GM12878 (cell line): ENCODE measurements at regions of chr11 and their contacts with region 1.

Region 1: DNA sequence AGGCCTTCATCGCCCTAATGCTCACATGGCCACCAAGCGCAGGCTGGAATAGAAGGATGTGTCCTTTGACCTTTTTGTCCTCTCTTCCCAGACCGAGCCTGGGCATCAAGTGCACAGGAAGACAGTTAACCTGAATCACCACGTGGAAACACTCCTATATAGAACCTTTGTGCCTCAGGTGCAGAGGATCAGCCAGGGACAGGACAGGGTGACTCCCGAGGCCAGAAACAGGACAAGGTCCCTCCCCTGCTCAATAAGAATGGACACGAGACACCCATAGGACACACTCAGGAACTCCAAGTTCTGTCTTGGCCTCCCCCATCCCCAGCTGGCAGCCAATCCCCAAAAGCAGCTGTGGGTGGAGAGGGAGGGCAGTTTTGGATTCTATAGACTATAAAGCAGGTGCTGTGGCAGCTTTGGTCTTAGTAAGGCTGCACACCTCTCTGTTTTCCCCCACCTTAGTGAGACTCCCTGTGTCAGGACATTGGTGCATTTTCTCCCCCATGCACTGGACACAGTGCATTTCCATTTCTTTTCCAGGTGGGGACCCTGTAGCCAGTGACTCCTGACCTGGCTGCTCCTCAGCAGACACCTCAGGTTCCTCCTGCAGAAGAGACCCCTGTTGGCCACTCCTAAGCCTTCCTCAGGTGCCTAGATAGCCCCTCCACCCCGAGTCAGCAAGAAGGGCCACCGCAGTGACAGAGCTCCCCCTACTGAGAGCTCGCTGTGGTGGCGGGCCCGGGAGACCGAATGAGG is 43.6 kb upstream of the POU2AF1 start:
- DNase-seq: no peak
- ATAC-seq: peak; percentile 93
- H3K4me3 ChIP-seq: no peak overlapping the region
- H3K27ac ChIP-seq: no peak overlapping the region
- H3K4me1 ChIP-seq: peaks cover 39% of the 10 kb centered on the region
- H3K27me3 ChIP-seq: no peaks in the 10 kb centered on the region
- CTCF ChIP-seq: peak; percentile 85 to 98 (median 94)
- EP300 ChIP-seq: no peak
- POLR2A ChIP-seq: no peak
- RAD21 ChIP-seq: peak; percentile 100

Region 2: GRCh38 chr11:111172321-111172862 is 250.3 kb before region 1 on chr11:
- CTCF ChIA-PET with region 1: no interaction called
- POLR2A ChIA-PET with region 1: no interaction called
- RAD21 ChIA-PET with region 1: no interaction called
- SMC1A ChIA-PET with region 1: no interaction called
- in situ Hi-C with region 1: no loop called
- intact Hi-C with region 1: no loop called
- DNase-seq: no peak
- ATAC-seq: no peak
- H3K4me3 ChIP-seq: no peak overlapping the region
- H3K27ac ChIP-seq: no peak overlapping the region
- H3K4me1 ChIP-seq: peaks cover 18% of the 10 kb centered on the region
- H3K27me3 ChIP-seq: no peaks in the 10 kb centered on the region
- CTCF ChIP-seq: no peak
- EP300 ChIP-seq: no peak
- POLR2A ChIP-seq: no peak
- RAD21 ChIP-seq: no peak

Region 3: GRCh38 chr11:111230122-111230465 is 192.6 kb before region 1 on chr11:
- CTCF ChIA-PET with region 1: interaction called, 4 read pairs
- POLR2A ChIA-PET with region 1: no interaction called
- RAD21 ChIA-PET with region 1: interaction called, 9 read pairs
- SMC1A ChIA-PET with region 1: interaction called, 13 read pairs
- in situ Hi-C with region 1: no loop called
- intact Hi-C with region 1: no loop called
- DNase-seq: no peak
- ATAC-seq: peak; percentile 62
- H3K4me3 ChIP-seq: no peak overlapping the region
- H3K27ac ChIP-seq: no peak overlapping the region
- H3K4me1 ChIP-seq: peaks cover 10% of the 10 kb centered on the region
- H3K27me3 ChIP-seq: peaks cover 0 to 3% of the 10 kb centered on the region in 2 experiments; a peak in 1 of 4 replicates
- CTCF ChIP-seq: no peak
- EP300 ChIP-seq: no peak
- POLR2A ChIP-seq: no peak
- RAD21 ChIP-seq: no peak

Region 4: DNA sequence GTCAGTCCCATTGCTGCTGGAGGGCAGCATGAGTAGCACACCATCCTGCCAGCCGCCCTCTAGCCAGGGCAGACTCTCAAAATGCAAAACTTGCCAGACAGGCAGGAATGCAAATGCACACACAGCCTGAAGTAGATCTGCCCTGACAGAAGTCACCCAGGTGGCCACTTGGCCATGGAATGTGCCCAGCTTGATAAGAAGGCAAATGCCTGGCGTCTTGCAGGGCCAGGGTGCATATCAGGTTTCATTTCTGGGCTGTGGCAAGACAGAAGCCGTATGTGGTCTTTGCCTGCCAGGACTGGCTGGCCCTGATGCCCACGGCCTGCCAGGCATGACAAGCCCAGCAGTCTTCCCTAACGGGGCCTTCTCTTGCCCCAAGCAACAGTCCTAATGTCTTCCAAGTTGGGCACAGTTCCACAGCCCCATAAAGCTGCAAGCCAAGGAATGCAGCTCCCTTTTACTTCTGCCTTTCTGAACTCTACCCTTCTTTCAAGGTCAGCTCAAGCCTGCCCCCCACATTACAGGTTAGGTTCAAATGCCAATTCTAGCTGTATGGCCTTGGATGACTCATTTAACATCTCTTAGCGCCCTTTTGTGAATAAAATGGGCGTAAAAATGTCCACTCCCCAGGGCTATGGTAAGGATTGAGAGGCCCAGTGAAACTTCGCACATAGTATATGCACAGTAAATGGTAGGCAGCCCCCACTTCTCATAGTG is 94.6 kb before region 1 on chr11:
- CTCF ChIA-PET with region 1: interaction called, 27 read pairs
- POLR2A ChIA-PET with region 1: interaction called, 4 read pairs
- RAD21 ChIA-PET with region 1: interaction called, 4 read pairs
- SMC1A ChIA-PET with region 1: interaction called, 5 read pairs
- in situ Hi-C with region 1: no loop called
- intact Hi-C with region 1: no loop called
- DNase-seq: no peak
- ATAC-seq: no peak
- H3K4me3 ChIP-seq: no peak overlapping the region
- H3K27ac ChIP-seq: no peak overlapping the region
- H3K4me1 ChIP-seq: peaks cover 3% of the 10 kb centered on the region; the same call in 1 of the 2 replicates
- H3K27me3 ChIP-seq: no peaks in the 10 kb centered on the region; a peak in 1 of 4 replicates
- CTCF ChIP-seq: no peak
- EP300 ChIP-seq: no peak
- POLR2A ChIP-seq: no peak
- RAD21 ChIP-seq: no peak

Region 5: GRCh38 chr11:111359223-111360149 is 63.2 kb before region 1 on chr11:
- CTCF ChIA-PET with region 1: interaction called, 213 read pairs
- POLR2A ChIA-PET with region 1: interaction called, 415 read pairs
- RAD21 ChIA-PET with region 1: interaction called, 657 read pairs
- SMC1A ChIA-PET with region 1: interaction called, 972 read pairs
- in situ Hi-C with region 1: no loop called
- intact Hi-C with region 1: loop called (anchors 1 kb)
- DNase-seq: no peak
- ATAC-seq: peak; percentile 46; the same call in 2 of the 3 replicates
- H3K4me3 ChIP-seq: no peak overlapping the region
- H3K27ac ChIP-seq: 0 out of 2 replicates have a peak overlapping the region, but pooled peaks have one; percentile 16
- H3K4me1 ChIP-seq: peaks cover 22% of the 10 kb centered on the region
- H3K27me3 ChIP-seq: no peaks in the 10 kb centered on the region
- CTCF ChIP-seq: peak; percentile 2 to 27 (median 23); a peak in 2 of 6 replicates
- EP300 ChIP-seq: no peak
- POLR2A ChIP-seq: no peak
- RAD21 ChIP-seq: peak; percentile 41

Region 6: GRCh38 chr11:111399187-111400031 is 23.3 kb before region 1 on chr11:
- CTCF ChIA-PET with region 1: interaction called, 14 read pairs
- POLR2A ChIA-PET with region 1: no interaction called
- RAD21 ChIA-PET with region 1: interaction called, 29 read pairs
- SMC1A ChIA-PET with region 1: interaction called, 16 read pairs
- in situ Hi-C with region 1: no loop called
- intact Hi-C with region 1: no loop called
- DNase-seq: no peak
- ATAC-seq: peak; percentile 35; the same call in 2 of the 3 replicates
- H3K4me3 ChIP-seq: no peak overlapping the region; the same call in 1 of the 2 replicates
- H3K27ac ChIP-seq: peak overlapping the region; percentile 53
- H3K4me1 ChIP-seq: peaks cover 44% of the 10 kb centered on the region
- H3K27me3 ChIP-seq: no peaks in the 10 kb centered on the region
- CTCF ChIP-seq: peak in 2 of 3 experiments; percentile 14 to 43; a peak in 1 of 6 replicates
- EP300 ChIP-seq: no peak
- POLR2A ChIP-seq: no peak
- RAD21 ChIP-seq: peak; percentile 60